T-cell (primary cell): ENCODE measurements at regions of chr5 and their contacts with region 1.

Region 1: GRCh38 chr5:13814302-13814701 is 130.2 kb downstream of the DNAH5 start:
- DNase-seq: no peak
- ATAC-seq: no peak
- H3K4me3 ChIP-seq: no peak overlapping the region
- H3K4me3 Mint-ChIP-seq: no peak overlapping the region
- H3K27ac ChIP-seq: no peak overlapping the region
- H3K27ac Mint-ChIP-seq: no peak overlapping the region
- H3K4me1 ChIP-seq: no peaks in the 10 kb centered on the region
- H3K4me1 Mint-ChIP-seq: no peaks in the 10 kb centered on the region
- H3K27me3 ChIP-seq: no peaks in the 10 kb centered on the region
- H3K27me3 Mint-ChIP-seq: no peaks in the 10 kb centered on the region

Region 2: GRCh38 chr5:13735686-13736085 is 78.6 kb before region 1 on chr5:
- CTCF ChIA-PET with region 1: no interaction called
- POLR2A ChIA-PET with region 1: no interaction called
- DNase-seq: no peak
- ATAC-seq: no peak
- H3K4me3 ChIP-seq: no peak overlapping the region
- H3K4me3 Mint-ChIP-seq: no peak overlapping the region
- H3K27ac ChIP-seq: no peak overlapping the region
- H3K27ac Mint-ChIP-seq: no peak overlapping the region
- H3K4me1 ChIP-seq: no peaks in the 10 kb centered on the region
- H3K4me1 Mint-ChIP-seq: no peaks in the 10 kb centered on the region
- H3K27me3 ChIP-seq: no peaks in the 10 kb centered on the region
- H3K27me3 Mint-ChIP-seq: no peaks in the 10 kb centered on the region

Region 3: DNA sequence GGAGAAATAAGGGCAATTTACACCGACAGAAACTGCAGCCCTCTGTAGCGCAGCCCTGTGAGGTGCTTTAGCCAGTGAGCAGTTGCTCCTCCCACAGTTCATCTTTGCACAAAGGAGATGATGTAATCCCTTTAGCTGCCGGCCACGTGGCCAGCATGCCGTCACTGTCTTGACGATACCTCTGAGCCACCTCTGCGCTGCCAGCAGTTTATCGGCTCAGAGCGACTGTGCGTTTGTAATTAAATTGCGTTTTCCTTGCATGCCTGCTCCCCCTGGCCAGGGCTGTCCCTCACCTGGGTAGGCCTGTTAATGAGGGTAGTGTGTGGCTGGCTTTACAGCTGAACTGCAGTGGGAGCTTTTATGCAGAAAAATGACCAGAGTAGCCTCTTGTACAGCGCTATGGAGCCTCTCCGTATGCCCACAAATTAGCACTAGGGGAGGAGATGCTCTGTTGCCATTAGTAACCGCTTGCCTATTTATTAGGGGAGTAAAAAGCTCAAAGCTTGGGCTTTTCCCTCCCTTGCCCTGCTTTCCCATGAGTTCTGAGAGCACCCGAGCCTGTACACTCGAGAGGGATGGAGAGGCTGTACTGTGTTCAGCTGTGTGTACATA is 435.9 kb after region 1 on chr5:
- CTCF ChIA-PET with region 1: no interaction called
- POLR2A ChIA-PET with region 1: interaction called in 1 of 2 experiments, 10 read pairs
- DNase-seq: no peak
- ATAC-seq: no peak
- H3K4me3 ChIP-seq: no peak overlapping the region
- H3K4me3 Mint-ChIP-seq: no peak overlapping the region
- H3K27ac ChIP-seq: no peak overlapping the region
- H3K27ac Mint-ChIP-seq: no peak overlapping the region
- H3K4me1 ChIP-seq: no peaks in the 10 kb centered on the region
- H3K4me1 Mint-ChIP-seq: no peaks in the 10 kb centered on the region
- H3K27me3 ChIP-seq: peaks cover 0 to 12% of the 10 kb centered on the region in 2 experiments
- H3K27me3 Mint-ChIP-seq: peaks cover 5 to 7% of the 10 kb centered on the region in 2 donors